GM18951 (cell line): ENCODE measurements at regions of chr13 and their contacts with region 1.

Region 1: DNA sequence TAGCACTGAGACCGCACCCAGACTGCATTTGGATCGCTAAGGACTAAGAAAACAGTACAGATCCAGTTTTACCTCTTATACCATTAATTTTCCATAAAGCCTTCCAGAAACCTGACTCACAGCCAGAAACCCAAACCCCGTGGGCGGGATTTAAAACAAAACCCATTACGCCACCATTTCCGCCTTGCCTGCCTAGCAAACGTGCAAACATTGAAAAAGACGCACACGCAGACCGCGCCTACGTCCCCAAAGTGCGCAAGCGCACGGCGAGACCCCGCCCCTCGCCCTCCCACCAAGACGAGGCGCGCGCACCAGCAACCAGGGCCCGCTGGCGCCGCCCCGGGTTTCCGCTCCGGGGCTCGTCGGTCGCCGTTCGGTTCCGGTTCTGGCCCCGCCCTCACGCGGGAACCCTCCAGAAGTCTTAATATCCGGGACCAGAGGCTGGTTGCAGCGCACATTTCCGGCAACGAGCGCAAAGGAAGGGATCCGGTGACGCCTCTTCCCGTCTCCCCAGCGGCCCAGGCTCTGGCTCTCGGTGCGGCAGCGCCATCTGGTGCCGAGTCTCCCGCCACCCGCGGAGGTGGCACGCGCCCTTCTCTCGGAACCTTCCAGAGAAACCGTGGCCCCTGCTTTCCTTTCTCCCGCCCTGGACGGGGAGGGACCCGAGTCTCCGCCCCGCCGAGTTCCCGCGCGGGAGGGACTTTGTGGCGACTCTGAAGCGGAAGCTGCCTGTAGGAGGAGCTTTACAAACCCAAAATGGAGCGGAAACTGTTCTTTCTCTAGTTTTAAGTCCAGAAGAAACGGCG is 256.9 kb upstream of the STARD13 start:
- POLR2A ChIP-seq: peak; percentile 63

Region 2: GRCh38 chr13:32586080-32586900 is 956.2 kb before region 1 on chr13 and contains the start of gene PDS5B:
- in situ Hi-C with region 1: loop called (anchors 25 kb)
- POLR2A ChIP-seq: peak; percentile 86

Region 3: GRCh38 chr13:33204130-33204927 is 338.2 kb before region 1 on chr13:
- in situ Hi-C with region 1: loop called (anchors 25 kb)
- POLR2A ChIP-seq: no peak

Region 4: GRCh38 chr13:33723772-33724435 is 181.4 kb after region 1 on chr13:
- in situ Hi-C with region 1: loop called (anchors 5 kb)
- POLR2A ChIP-seq: no peak